ENCODE measurements at regions of chr6 and their contacts with region 1.

Region 1: GRCh38 chr6:22036275-22036674 is 260.6 kb downstream of the PRL start:
- DNase-seq: no peak
- CTCF ChIP-seq: no peak

Region 2: GRCh38 chr6:22025468-22026160 is 10.7 kb before region 1 on chr6:
- CTCF ChIA-PET with region 1: interaction called, 15 read pairs
- POLR2A ChIA-PET with region 1: no interaction called
- DNase-seq: peak; percentile 43
- CTCF ChIP-seq: no peak

Region 3: GRCh38 chr6:22049002-22049401 is 12.7 kb after region 1 on chr6:
- CTCF ChIA-PET with region 1: no interaction called
- POLR2A ChIA-PET with region 1: no interaction called
- DNase-seq: no peak
- CTCF ChIP-seq: no peak